Activated naive CD4-positive, alpha-beta T cell treated with anti-CD3 and anti-CD28 coated beads for 36 hours (primary cell): ENCODE measurements at regions of chr6 and their contacts with region 1.

Region 1: DNA sequence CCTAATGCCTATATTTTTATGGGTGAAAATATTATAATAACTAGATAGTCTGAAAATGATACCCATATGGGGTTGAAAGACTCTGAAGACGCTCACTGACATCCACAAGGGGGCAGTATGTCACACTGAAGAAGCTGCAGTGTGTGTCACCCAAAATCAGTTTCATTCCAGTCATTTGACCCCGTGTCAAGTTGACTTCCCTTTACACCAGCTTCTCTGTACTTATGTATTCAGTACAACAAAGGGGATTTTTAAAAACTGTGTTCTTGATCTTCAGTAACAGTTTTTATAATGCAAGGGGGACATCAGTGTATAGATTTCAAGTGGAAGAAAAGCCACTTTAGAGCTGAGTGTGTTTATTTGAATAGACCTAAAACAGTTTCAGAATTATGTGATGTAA is 19.3 kb downstream of the FAXC start:
- DNase-seq: peak; percentile 84
- H3K4me3 Mint-ChIP-seq: no peak overlapping the region
- H3K27ac Mint-ChIP-seq: no peak overlapping the region
- H3K4me1 Mint-ChIP-seq: peaks cover 4% of the 10 kb centered on the region
- H3K27me3 Mint-ChIP-seq: peaks cover 7% of the 10 kb centered on the region

Region 2: DNA sequence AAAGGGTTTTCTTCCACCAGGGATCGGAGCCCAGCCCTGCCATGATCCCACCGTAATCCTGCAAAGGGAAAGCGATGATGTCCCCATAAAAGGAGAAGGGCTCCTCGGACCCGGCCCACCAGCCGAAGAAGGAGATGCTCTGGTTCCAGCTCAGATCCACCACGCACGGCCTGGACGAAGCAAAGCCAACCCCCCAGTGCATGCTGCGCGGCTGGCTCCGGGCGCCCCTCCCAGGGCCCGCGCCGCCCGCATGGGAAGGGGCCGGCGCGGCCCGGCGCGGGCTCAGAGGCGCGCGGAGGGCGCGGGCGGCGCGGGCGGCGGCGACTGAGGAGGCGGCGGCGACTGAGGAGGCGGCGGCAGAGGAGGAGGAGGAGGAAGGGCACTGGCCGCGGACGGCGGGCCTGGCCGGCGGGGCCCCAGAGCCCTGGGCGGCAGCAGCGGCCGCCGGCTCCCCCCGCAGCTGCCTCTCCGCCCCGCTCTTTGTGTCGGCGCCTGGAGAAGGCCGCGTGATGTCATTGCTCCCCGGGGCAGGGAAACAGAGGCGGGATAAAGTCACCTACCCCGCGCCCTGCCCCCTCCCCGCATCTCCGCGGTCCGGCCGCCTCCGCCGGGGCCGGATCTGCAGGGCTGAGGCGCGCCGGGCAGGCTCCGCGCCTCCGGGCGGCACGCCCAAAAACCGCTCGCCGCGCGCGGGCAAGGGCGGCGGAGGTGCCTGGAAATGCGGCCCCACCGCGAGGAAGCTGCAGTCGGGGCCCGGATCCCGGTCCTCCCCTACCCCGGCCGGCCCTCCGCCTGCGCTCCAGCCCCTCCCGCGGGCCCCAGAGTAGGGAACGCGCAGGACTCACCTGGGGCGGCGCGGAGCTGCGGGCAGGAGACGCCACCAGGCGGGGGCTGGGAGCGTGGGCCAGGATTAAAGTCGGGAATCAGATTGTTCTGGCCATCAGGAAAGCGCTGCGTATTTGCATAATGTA is 19.3 kb after region 1 on chr6 and contains the start of gene FAXC:
- CTCF ChIA-PET with region 1: interaction called, 10 read pairs
- intact Hi-C with region 1: loop called (anchors 1 kb)
- DNase-seq: peak; percentile 9
- H3K4me3 Mint-ChIP-seq: peak within 1 kb of the TSS; percentile 21
- H3K27ac Mint-ChIP-seq: no peak within 1 kb of the TSS
- H3K4me1 Mint-ChIP-seq: no peaks in the 10 kb centered on the region
- H3K27me3 Mint-ChIP-seq: peaks cover 50% of the 10 kb centered on the region
- total RNA-seq, gene FAXC: not detected

Region 3: DNA sequence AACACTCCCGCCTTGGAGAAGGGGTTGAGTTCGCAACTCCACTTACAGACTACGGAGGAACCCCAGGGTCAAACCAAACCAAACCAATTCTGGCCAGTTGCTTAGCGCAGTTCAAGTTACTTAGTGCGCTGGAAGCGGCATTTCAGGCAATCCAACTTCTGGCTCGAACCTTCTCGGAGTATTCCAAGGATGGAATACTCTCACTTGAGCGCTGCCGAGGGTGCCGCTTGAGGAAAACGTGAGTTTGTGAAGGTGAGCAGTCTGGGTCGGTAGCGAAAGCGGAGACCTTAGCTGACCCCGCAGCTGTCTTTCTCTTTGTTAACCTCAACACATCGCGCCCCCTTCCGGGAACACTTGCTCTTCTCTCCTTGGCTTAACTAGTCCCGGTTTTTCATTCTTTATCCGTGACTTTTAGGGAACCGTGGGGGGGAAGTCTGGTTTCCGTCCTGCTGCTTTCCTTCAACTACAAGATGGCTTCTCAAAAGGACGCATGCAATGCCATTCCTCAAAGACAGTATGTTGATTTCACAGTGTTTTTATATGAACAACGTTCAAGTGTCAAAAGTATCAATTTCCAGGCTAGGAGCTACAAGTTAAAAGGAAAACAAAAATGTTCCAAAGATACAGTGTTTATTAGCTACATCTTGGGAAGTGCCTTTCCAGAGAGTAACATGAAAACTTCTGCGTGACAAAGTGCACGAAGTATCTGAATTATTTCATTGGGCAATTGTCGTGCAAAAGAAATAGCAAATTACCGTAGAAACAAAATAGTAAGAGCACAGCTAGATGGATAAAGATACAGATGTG is 95.7 kb after region 1 on chr6:
- CTCF ChIA-PET with region 1: interaction called, 10 read pairs
- intact Hi-C with region 1: loop called (anchors 1 kb)
- DNase-seq: peak; percentile 83
- H3K4me3 Mint-ChIP-seq: peak overlapping the region; percentile 95
- H3K27ac Mint-ChIP-seq: peak overlapping the region; percentile 99
- H3K4me1 Mint-ChIP-seq: peaks cover 58% of the 10 kb centered on the region
- H3K27me3 Mint-ChIP-seq: no peaks in the 10 kb centered on the region

Region 4: GRCh38 chr6:99588618-99589289 is 258.6 kb after region 1 on chr6:
- CTCF ChIA-PET with region 1: interaction called, 6 read pairs
- intact Hi-C with region 1: loop called (anchors 1 kb)
- DNase-seq: peak; percentile 83
- H3K4me3 Mint-ChIP-seq: peak overlapping the region; percentile 76
- H3K27ac Mint-ChIP-seq: no peak overlapping the region
- H3K4me1 Mint-ChIP-seq: peaks cover 18% of the 10 kb centered on the region
- H3K27me3 Mint-ChIP-seq: peaks cover 64% of the 10 kb centered on the region

Region 5: DNA sequence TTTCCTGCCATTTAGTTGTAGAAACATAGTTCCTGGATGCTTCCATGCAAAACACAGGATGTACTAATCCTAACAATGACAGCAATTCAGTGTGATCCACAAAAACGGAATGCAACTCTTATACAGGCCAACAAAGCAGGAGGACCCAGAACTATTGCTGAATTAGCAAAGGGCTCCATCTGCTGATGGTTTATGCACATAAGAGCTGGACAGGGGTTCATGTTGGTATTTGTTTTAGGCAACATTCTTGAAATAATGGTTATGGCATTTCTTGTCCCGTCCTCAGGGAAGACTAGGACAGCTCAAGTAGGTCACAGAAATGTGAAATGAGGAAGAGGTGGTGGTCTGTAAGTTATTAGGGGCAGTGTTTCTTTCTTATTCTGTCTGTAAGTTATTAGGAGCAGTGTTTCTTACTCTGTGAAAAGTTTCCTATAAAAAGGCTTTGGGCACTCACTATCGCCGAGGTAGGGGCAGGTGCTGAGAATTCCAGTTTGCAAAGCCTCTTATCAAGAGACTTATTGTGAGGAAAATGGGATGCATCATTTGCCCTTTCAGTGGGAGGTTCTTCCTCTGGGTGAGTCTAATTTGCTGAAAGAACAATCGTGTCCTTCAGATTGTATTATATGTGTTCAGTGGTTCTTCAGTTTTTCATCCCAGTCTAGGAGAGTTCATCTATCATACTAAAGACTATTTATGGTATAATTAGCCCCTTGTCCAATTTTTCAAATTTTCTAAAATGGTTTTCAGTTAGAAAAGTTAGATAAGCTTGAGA is 492.8 kb after region 1 on chr6:
- CTCF ChIA-PET with region 1: interaction called, 3 read pairs
- intact Hi-C with region 1: loop called (anchors 2 kb)
- DNase-seq: no peak
- H3K4me3 Mint-ChIP-seq: no peak overlapping the region
- H3K27ac Mint-ChIP-seq: no peak overlapping the region
- H3K4me1 Mint-ChIP-seq: peaks cover 2% of the 10 kb centered on the region
- H3K27me3 Mint-ChIP-seq: peaks cover 28% of the 10 kb centered on the region